GM12878 (cell line): ENCODE measurements at regions of chr6 and their contacts with region 1.

Region 1: GRCh38 chr6:11496152-11497060 is 41.1 kb upstream of the TMEM170B start:
- DNase-seq: peak; percentile 84
- ATAC-seq: peak; percentile 77
- H3K4me3 ChIP-seq: no peak overlapping the region
- H3K27ac ChIP-seq: peak overlapping the region; percentile 68
- H3K4me1 ChIP-seq: peaks cover 56% of the 10 kb centered on the region
- H3K27me3 ChIP-seq: no peaks in the 10 kb centered on the region
- CTCF ChIP-seq: peak; percentile 76 to 96 (median 88)
- EP300 ChIP-seq: no peak
- POLR2A ChIP-seq: no peak
- RAD21 ChIP-seq: peak; percentile 99

Region 2: DNA sequence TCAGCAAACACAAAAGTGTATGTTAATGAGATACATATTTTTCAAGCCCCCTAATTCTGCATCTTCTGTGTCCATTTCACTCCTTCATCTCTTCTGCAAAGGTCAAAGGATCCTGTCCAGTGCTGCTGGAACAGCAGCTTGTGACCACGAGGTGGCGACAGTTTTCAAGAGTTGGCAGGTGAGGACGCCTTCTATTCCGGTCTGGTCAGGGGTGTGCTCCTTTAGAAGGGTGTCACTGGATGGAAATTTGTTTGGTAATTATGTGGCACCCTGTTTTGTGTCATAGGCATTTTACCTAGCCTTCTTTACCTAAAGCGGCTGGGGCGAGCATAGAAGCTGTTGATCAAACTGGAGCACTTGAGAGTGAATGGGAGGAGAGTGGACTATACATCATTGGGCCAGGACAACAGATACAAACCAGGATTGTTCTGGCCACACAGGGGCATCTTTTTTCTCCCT is 352.0 kb before region 1 on chr6:
- CTCF ChIA-PET with region 1: interaction called, 152 read pairs
- POLR2A ChIA-PET with region 1: interaction called, 7 read pairs
- RAD21 ChIA-PET with region 1: interaction called, 98 read pairs
- SMC1A ChIA-PET with region 1: interaction called, 208 read pairs
- in situ Hi-C with region 1: loop called (anchors 5 kb)
- intact Hi-C with region 1: loop called (anchors 1 kb)
- DNase-seq: peak; percentile 49
- ATAC-seq: peak; percentile 99
- H3K4me3 ChIP-seq: no peak overlapping the region
- H3K27ac ChIP-seq: no peak overlapping the region
- H3K4me1 ChIP-seq: peaks cover 3% of the 10 kb centered on the region; the same call in 1 of the 2 replicates
- H3K27me3 ChIP-seq: no peaks in the 10 kb centered on the region
- CTCF ChIP-seq: peak; percentile 93 to 97 (median 95)
- EP300 ChIP-seq: no peak
- POLR2A ChIP-seq: no peak
- RAD21 ChIP-seq: peak; percentile 100

Region 3: GRCh38 chr6:11232193-11232769 is 264.1 kb before region 1 on chr6 and contains the start of gene NEDD9:
- CTCF ChIA-PET with region 1: interaction called, 7 read pairs
- POLR2A ChIA-PET with region 1: interaction called, 4 read pairs
- RAD21 ChIA-PET with region 1: interaction called, 41 read pairs
- SMC1A ChIA-PET with region 1: interaction called, 39 read pairs
- in situ Hi-C with region 1: no loop called
- intact Hi-C with region 1: loop called (anchors 1 kb)
- DNase-seq: peak; percentile 86
- ATAC-seq: peak; percentile 98
- H3K4me3 ChIP-seq: peak within 1 kb of the TSS; percentile 84
- H3K27ac ChIP-seq: peak within 1 kb of the TSS; percentile 66
- H3K4me1 ChIP-seq: peaks cover 10% of the 10 kb centered on the region; the same call in 1 of the 2 replicates
- H3K27me3 ChIP-seq: no peaks in the 10 kb centered on the region
- CTCF ChIP-seq: no peak
- EP300 ChIP-seq: no peak
- POLR2A ChIP-seq: peak; percentile 96
- RAD21 ChIP-seq: no peak
- polyA plus RNA-seq, gene NEDD9: 4.9 to 6.3 TPM

Region 4: DNA sequence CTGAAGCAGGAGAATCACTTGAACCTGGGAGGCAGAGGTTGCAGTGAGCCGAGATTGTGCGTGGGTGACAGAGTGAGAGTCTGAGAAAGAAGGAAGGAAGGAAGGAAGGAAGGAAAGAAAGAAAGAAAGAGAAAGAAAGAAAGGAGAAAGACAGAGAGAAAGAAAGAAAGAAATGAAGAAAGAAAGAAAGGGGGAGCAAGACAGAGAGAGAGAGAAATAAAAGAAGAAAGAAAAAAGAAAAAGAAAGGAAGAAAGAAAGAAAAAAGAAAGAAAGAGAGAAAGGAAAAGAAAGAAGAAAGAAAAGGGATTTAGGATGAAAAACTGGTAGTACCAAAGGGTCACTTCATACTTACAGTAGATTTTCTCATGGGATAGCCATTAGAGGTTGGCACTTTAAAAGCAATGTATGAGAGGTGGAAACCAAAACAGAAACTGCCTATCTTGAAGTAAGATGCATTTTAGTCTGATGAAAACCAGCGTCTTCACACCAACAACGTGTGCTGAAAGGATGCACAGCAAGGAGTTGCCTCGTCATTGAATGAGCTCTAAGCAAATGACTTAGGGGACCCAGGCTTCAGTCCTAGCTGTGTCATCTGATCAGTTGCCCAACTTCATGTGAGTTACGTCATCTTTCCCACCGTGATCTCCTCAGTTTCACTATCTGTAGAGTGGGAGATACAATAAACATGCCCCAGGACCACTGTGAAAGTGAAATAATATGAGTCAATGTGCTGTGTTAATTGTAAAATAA is 130.0 kb before region 1 on chr6:
- CTCF ChIA-PET with region 1: interaction called, 45 read pairs
- POLR2A ChIA-PET with region 1: interaction called, 11 read pairs
- RAD21 ChIA-PET with region 1: interaction called, 51 read pairs
- SMC1A ChIA-PET with region 1: interaction called, 40 read pairs
- in situ Hi-C with region 1: no loop called
- intact Hi-C with region 1: no loop called
- DNase-seq: peak; percentile 89
- ATAC-seq: peak; percentile 86
- H3K4me3 ChIP-seq: peak overlapping the region; percentile 15; the same call in 1 of the 2 replicates
- H3K27ac ChIP-seq: peak overlapping the region; percentile 78
- H3K4me1 ChIP-seq: peaks cover 64% of the 10 kb centered on the region
- H3K27me3 ChIP-seq: no peaks in the 10 kb centered on the region
- CTCF ChIP-seq: no peak
- EP300 ChIP-seq: 0 out of 4 replicates have a peak, but pooled peaks of 1 of the 2 experiments have one; percentile 12
- POLR2A ChIP-seq: peak; percentile 45; the same call in 1 of the 2 replicates
- RAD21 ChIP-seq: no peak

Region 5: GRCh38 chr6:11445146-11445545 is 51.3 kb before region 1 on chr6:
- CTCF ChIA-PET with region 1: interaction called, 4 read pairs
- POLR2A ChIA-PET with region 1: no interaction called
- RAD21 ChIA-PET with region 1: interaction called, 17 read pairs
- SMC1A ChIA-PET with region 1: interaction called, 18 read pairs
- in situ Hi-C with region 1: no loop called
- intact Hi-C with region 1: no loop called
- DNase-seq: no peak
- ATAC-seq: peak; percentile 23
- H3K4me3 ChIP-seq: no peak overlapping the region
- H3K27ac ChIP-seq: peak overlapping the region; percentile 27
- H3K4me1 ChIP-seq: peaks cover 3% of the 10 kb centered on the region; the same call in 1 of the 2 replicates
- H3K27me3 ChIP-seq: no peaks in the 10 kb centered on the region
- CTCF ChIP-seq: no peak
- EP300 ChIP-seq: no peak
- POLR2A ChIP-seq: no peak
- RAD21 ChIP-seq: no peak

Region 6: DNA sequence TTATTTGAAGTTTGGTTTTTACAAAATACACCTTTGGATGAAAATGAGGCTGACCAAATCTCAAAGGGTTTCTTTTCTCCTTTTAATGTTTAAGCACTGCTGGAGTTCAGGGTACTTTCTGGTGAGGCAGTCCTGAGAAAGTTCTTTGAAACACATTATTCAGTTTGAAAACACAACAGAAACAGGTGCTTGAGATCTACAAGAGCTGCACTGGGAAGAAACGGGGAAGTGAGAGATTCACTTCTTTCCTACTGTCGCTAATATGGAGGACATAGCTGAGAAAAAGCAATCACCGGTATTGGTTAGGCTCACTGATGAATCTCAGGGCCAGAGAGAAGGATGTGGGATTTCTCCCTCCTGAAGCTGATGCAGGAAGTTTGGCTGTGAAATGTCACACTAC is 18.3 kb after region 1 on chr6:
- CTCF ChIA-PET with region 1: interaction called, 47 read pairs
- POLR2A ChIA-PET with region 1: interaction called, 4 read pairs
- RAD21 ChIA-PET with region 1: interaction called, 60 read pairs
- SMC1A ChIA-PET with region 1: interaction called, 109 read pairs
- in situ Hi-C with region 1: no loop called
- intact Hi-C with region 1: loop called (anchors 1 kb)
- DNase-seq: peak; percentile 87
- ATAC-seq: peak; percentile 87
- H3K4me3 ChIP-seq: no peak overlapping the region
- H3K27ac ChIP-seq: peak overlapping the region; percentile 97
- H3K4me1 ChIP-seq: peaks cover 40% of the 10 kb centered on the region
- H3K27me3 ChIP-seq: no peaks in the 10 kb centered on the region
- CTCF ChIP-seq: no peak
- EP300 ChIP-seq: peak in 1 of 2 experiments; percentile 89; a peak in 1 of 4 replicates
- POLR2A ChIP-seq: no peak
- RAD21 ChIP-seq: no peak

Region 7: GRCh38 chr6:11585426-11586016 is 89.1 kb after region 1 on chr6:
- CTCF ChIA-PET with region 1: interaction called, 12 read pairs
- POLR2A ChIA-PET with region 1: no interaction called
- RAD21 ChIA-PET with region 1: interaction called, 4 read pairs
- SMC1A ChIA-PET with region 1: interaction called, 5 read pairs
- in situ Hi-C with region 1: no loop called
- intact Hi-C with region 1: no loop called
- DNase-seq: peak; percentile 32
- ATAC-seq: peak; percentile 70
- H3K4me3 ChIP-seq: no peak overlapping the region
- H3K27ac ChIP-seq: no peak overlapping the region
- H3K4me1 ChIP-seq: no peaks in the 10 kb centered on the region
- H3K27me3 ChIP-seq: no peaks in the 10 kb centered on the region
- CTCF ChIP-seq: peak; percentile 45 to 67 (median 59); a peak in 5 of 6 replicates
- EP300 ChIP-seq: no peak
- POLR2A ChIP-seq: no peak
- RAD21 ChIP-seq: peak; percentile 77

Region 8: GRCh38 chr6:11609315-11610071 is 113.1 kb after region 1 on chr6:
- CTCF ChIA-PET with region 1: no interaction called
- POLR2A ChIA-PET with region 1: no interaction called
- RAD21 ChIA-PET with region 1: no interaction called
- SMC1A ChIA-PET with region 1: no interaction called
- in situ Hi-C with region 1: no loop called
- intact Hi-C with region 1: no loop called
- DNase-seq: no peak
- ATAC-seq: no peak
- H3K4me3 ChIP-seq: no peak overlapping the region
- H3K27ac ChIP-seq: no peak overlapping the region
- H3K4me1 ChIP-seq: no peaks in the 10 kb centered on the region
- H3K27me3 ChIP-seq: peaks cover 0 to 3% of the 10 kb centered on the region in 2 experiments; a peak in 2 of 4 replicates
- CTCF ChIP-seq: no peak
- EP300 ChIP-seq: no peak
- POLR2A ChIP-seq: no peak
- RAD21 ChIP-seq: no peak

Region 9: DNA sequence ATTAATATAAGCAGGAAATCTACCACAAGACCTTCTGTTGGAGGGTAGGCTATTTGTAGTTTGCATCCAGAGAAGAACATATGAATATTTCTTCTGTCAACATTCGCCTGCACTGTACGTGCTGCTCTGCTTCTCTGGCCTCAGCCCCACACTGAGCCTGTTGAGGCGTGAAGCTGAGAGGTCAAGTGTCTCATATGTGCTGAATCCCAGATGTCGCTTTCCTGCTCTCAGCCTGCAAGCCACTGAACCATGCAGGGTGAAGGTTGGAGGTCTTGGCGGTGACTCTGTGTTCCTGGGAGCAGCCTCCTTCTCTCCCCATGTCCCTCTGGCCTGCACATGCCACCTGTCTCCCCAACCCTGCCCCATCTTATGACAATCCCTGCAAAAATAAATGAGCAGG is 124.7 kb after region 1 on chr6:
- CTCF ChIA-PET with region 1: no interaction called
- POLR2A ChIA-PET with region 1: no interaction called
- RAD21 ChIA-PET with region 1: no interaction called
- SMC1A ChIA-PET with region 1: no interaction called
- in situ Hi-C with region 1: no loop called
- intact Hi-C with region 1: no loop called
- DNase-seq: no peak
- ATAC-seq: peak; percentile 36; the same call in 2 of the 3 replicates
- H3K4me3 ChIP-seq: no peak overlapping the region
- H3K27ac ChIP-seq: no peak overlapping the region
- H3K4me1 ChIP-seq: no peaks in the 10 kb centered on the region
- H3K27me3 ChIP-seq: no peaks in the 10 kb centered on the region
- CTCF ChIP-seq: no peak
- EP300 ChIP-seq: no peak
- POLR2A ChIP-seq: no peak
- RAD21 ChIP-seq: no peak